ENCODE measurements at regions of chr16 and their contacts with region 1.

Region 1: DNA sequence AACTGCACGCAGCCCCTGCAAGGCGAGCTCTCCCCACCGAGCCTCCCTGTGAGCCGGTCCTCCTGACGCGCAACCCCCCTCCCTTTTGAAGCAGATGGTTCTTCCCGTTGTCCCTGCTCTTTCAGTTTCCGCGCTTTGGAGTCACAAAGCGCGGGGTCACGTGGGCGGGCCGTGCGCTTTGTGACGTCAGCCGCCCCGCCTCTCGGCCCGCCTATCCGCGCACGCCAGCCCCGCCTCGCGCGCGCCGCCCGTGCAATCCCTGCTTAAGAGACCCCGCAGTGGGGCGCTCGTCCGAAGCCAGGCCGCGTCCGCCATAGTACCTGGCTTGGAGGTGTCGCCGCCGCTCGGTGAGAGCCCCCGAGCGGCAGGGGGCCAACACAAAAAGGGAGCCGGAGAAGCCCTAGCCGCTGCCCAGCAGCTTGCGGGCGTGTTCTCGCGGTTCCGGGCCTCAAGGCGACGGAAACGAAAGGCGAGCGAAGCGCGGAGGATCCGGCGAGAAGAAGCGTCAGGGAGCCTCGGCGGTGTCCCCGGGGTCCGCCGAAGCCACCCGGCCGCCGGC is at the start of gene RBBP6:
- DNase-seq: peak; percentile 94
- ATAC-seq: peak; percentile 90
- H3K4me3 ChIP-seq: peak within 1 kb of the TSS; percentile 95 to 96 (median 95)
- H3K27ac ChIP-seq: peak within 1 kb of the TSS; percentile 96
- H3K4me1 ChIP-seq: peaks cover 73% of the 10 kb centered on the region
- H3K27me3 ChIP-seq: no peaks in the 10 kb centered on the region; a peak in 1 of 5 replicates
- CTCF ChIP-seq: peak; percentile 79
- EP300 ChIP-seq: no peak; a peak in 1 of 4 replicates
- POLR2A ChIP-seq: peak; percentile 95 to 96
- RAD21 ChIP-seq: peak; percentile 11
- total RNA-seq, gene RBBP6: 37.1 and 45.0 TPM in 2 replicates

Region 2: DNA sequence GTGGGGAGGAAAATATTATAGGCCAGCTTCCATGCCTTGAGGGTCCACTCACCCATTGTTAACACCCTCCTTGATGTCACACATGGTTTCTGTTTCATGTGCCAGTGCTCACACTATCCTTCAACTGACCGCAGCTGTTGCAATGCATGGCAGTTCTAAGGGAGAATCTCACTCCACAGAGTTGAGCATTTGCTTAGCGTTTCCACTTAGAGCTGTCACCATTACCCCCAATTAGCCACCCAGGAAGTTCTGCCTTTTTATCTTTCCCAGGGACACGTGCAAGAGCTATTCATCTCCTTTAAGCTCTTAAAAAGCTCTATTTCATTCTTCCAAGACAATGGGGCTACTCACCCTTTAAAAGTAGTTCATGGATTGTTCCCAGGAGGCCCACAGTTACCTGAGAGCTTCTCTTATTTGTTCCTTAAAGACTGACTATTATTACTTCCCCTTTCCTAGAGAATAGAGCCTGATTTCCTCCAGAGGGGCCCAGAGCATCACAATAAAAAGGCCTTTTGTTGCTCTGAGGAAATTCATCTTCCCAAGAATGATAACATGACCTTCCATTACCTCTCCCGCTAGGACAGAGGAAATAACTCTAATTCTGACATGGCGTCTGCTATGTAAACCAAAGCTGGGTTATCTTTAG is 156.5 kb before region 1 on chr16:
- CTCF ChIA-PET with region 1: no interaction called
- POLR2A ChIA-PET with region 1: no interaction called
- in situ Hi-C with region 1: no loop called
- intact Hi-C with region 1: no loop called
- DNase-seq: no peak
- ATAC-seq: no peak
- H3K4me3 ChIP-seq: no peak overlapping the region
- H3K27ac ChIP-seq: no peak overlapping the region
- H3K4me1 ChIP-seq: peaks cover 6% of the 10 kb centered on the region; the same call in 1 of the 2 replicates
- H3K27me3 ChIP-seq: no peaks in the 10 kb centered on the region
- CTCF ChIP-seq: no peak
- EP300 ChIP-seq: no peak
- POLR2A ChIP-seq: no peak
- RAD21 ChIP-seq: no peak

Region 3: GRCh38 chr16:24471561-24472350 is 67.6 kb before region 1 on chr16:
- CTCF ChIA-PET with region 1: no interaction called
- POLR2A ChIA-PET with region 1: no interaction called
- in situ Hi-C with region 1: no loop called
- intact Hi-C with region 1: no loop called
- DNase-seq: no peak
- ATAC-seq: no peak
- H3K4me3 ChIP-seq: no peak overlapping the region
- H3K27ac ChIP-seq: no peak overlapping the region
- H3K4me1 ChIP-seq: no peaks in the 10 kb centered on the region
- H3K27me3 ChIP-seq: peaks cover 0 to 4% of the 10 kb centered on the region in 2 experiments; a peak in 1 of 5 replicates
- CTCF ChIP-seq: no peak
- EP300 ChIP-seq: no peak
- POLR2A ChIP-seq: no peak
- RAD21 ChIP-seq: no peak

Region 4: DNA sequence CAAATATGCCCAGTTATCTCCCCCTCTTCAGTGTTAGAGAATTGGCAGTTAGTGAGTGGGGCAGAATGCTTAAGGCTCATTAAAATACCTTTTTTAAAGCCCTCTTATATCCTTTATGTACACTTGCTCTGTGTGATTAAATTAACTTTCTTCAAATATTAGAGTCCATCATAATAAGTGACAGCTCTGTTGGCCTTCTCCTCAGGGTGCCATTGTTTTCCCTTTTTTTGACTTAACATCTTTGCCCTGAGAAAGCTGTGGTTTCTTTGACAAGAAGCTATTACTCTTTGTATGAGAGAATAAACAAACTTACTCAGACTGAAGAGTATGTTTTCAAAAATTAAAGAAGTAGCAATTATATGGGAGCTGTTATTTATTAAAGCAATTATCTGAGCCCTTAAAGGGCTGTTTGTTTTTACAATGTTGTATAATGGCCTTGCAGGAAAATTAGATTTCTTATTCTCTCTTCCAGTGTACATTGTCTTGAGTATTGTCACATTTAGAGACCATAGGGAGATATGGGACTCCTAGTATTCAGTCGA is 13.4 kb after region 1 on chr16:
- CTCF ChIA-PET with region 1: no interaction called
- POLR2A ChIA-PET with region 1: interaction called, 17 read pairs
- in situ Hi-C with region 1: no loop called
- intact Hi-C with region 1: no loop called
- DNase-seq: no peak
- ATAC-seq: no peak
- H3K4me3 ChIP-seq: no peak overlapping the region
- H3K27ac ChIP-seq: no peak overlapping the region
- H3K4me1 ChIP-seq: no peaks in the 10 kb centered on the region
- H3K27me3 ChIP-seq: no peaks in the 10 kb centered on the region
- CTCF ChIP-seq: no peak
- EP300 ChIP-seq: no peak
- POLR2A ChIP-seq: no peak
- RAD21 ChIP-seq: no peak

Region 5: DNA sequence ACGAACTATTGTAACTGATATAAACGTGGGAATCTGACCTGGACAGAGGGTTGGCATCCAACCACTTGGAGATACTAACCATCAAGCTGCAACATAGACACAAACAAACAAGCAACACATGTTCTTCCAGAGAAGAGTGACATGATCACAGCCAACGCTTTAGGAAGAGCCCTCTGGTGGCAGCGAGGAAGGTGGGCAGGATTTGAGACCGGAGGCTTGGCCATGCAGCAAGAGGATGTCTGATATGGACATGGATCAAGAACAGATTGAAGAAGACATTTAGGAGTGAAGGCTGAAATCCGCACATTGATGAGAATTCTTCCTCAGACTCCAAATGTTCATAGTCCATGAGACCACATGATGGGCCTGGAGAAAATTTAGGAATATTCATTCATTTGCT is 149.8 kb after region 1 on chr16:
- CTCF ChIA-PET with region 1: no interaction called
- POLR2A ChIA-PET with region 1: no interaction called
- in situ Hi-C with region 1: no loop called
- intact Hi-C with region 1: loop called (anchors 5 kb)
- DNase-seq: peak; percentile 53
- ATAC-seq: peak; percentile 78
- H3K4me3 ChIP-seq: no peak overlapping the region
- H3K27ac ChIP-seq: no peak overlapping the region
- H3K4me1 ChIP-seq: peaks cover 34% of the 10 kb centered on the region
- H3K27me3 ChIP-seq: peaks cover 0 to 2% of the 10 kb centered on the region in 2 experiments; a peak in 1 of 5 replicates
- CTCF ChIP-seq: peak; percentile 81
- EP300 ChIP-seq: no peak
- POLR2A ChIP-seq: no peak
- RAD21 ChIP-seq: peak; percentile 56; the same call in 1 of the 2 replicates

Region 6: DNA sequence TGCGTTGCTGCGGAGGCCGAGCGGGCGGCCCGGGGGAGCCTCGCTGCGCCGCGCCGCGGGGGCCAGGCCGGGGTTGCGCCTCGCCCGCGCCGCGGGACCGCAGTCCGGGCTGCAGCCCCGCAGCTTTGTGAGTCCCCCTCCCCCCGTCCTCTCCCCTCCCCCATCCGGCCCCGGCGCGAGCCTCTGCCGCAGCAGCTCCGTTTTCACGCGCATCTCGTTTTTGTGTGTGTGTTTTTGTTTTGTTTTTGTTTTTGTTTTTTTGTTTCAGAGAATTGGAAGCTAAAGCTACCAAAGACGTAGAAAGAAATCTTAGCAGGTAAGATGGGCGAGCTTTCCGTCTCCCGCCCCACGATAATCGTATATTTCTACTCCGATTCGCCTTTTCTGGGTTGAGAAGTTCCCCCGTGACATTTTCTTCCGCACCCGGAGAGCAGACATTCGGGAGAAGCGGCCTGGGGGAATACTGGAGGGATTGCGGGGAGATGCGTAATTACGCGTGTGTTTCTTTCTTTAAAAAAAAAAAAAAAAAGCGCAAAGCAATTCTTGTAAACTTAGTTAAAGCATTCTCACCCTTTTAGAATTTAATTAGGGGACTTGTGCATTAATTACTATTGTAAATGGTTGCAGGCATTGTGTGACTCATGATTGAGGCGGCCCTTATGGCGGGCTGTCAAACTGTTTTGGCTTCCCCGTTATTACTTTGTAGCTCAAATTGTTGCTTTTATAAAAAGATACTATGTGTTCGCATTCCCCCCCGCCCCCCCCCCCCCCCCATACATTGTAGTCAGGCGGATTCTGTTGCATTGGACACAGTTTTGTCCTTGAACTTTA is 190.8 kb after region 1 on chr16:
- CTCF ChIA-PET with region 1: no interaction called
- POLR2A ChIA-PET with region 1: no interaction called
- in situ Hi-C with region 1: no loop called
- intact Hi-C with region 1: loop called (anchors 2 kb)
- DNase-seq: no peak
- ATAC-seq: no peak
- H3K4me3 ChIP-seq: peak overlapping the region; percentile 92 to 99 (median 96)
- H3K27ac ChIP-seq: peak overlapping the region; percentile 87
- H3K4me1 ChIP-seq: peaks cover 65% of the 10 kb centered on the region
- H3K27me3 ChIP-seq: no peaks in the 10 kb centered on the region; a peak in 3 of 5 replicates
- CTCF ChIP-seq: no peak
- EP300 ChIP-seq: no peak
- POLR2A ChIP-seq: no peak
- RAD21 ChIP-seq: no peak

Measured in HepG2 (cell line).